Endothelial cell of umbilical vein (primary cell): ENCODE measurements at regions of chr12 and their contacts with region 1.

Region 1: GRCh38 chr12:6285063-6285477 is 25.4 kb upstream of the PLEKHG6 start:
- DNase-seq: peak; percentile 76
- H3K4me3 ChIP-seq: no peak overlapping the region
- H3K27ac ChIP-seq: peak overlapping the region; percentile 63
- H3K4me1 ChIP-seq: peaks cover 28% of the 10 kb centered on the region
- H3K27me3 ChIP-seq: no peaks in the 10 kb centered on the region
- CTCF ChIP-seq: peak; percentile 81 to 91
- POLR2A ChIP-seq: no peak

Region 2: DNA sequence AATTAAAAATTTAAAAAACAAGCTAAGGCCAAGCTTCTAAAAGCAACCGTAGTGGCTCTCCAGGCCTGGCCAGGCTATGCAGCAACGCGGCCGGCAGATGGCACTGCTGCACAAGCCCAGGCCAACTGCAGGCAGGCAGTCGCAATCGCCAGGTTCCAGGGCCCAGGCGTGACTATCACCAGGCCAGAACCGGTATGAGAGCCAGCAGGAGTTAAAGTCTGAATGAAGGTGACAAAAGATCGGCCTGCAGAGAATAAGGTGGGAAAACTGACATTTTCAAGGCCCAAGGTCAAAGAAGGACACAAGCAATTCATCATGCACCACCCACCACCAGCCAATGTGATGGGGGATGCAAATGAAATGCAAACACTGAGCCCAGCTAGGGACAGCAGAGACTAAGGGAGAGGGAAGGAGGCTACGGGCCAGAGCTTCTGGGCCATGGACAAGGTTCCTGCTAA is 296.4 kb before region 1 on chr12:
- CTCF ChIA-PET with region 1: interaction called, 36 read pairs
- POLR2A ChIA-PET with region 1: no interaction called
- dilution Hi-C with region 1: no loop called
- intact Hi-C with region 1: loop called (anchors 1 kb)
- DNase-seq: peak; percentile 73
- H3K4me3 ChIP-seq: no peak overlapping the region
- H3K27ac ChIP-seq: no peak overlapping the region
- H3K4me1 ChIP-seq: no peaks in the 10 kb centered on the region
- H3K27me3 ChIP-seq: no peaks in the 10 kb centered on the region
- CTCF ChIP-seq: peak; percentile 91 to 93
- POLR2A ChIP-seq: no peak

Region 3: DNA sequence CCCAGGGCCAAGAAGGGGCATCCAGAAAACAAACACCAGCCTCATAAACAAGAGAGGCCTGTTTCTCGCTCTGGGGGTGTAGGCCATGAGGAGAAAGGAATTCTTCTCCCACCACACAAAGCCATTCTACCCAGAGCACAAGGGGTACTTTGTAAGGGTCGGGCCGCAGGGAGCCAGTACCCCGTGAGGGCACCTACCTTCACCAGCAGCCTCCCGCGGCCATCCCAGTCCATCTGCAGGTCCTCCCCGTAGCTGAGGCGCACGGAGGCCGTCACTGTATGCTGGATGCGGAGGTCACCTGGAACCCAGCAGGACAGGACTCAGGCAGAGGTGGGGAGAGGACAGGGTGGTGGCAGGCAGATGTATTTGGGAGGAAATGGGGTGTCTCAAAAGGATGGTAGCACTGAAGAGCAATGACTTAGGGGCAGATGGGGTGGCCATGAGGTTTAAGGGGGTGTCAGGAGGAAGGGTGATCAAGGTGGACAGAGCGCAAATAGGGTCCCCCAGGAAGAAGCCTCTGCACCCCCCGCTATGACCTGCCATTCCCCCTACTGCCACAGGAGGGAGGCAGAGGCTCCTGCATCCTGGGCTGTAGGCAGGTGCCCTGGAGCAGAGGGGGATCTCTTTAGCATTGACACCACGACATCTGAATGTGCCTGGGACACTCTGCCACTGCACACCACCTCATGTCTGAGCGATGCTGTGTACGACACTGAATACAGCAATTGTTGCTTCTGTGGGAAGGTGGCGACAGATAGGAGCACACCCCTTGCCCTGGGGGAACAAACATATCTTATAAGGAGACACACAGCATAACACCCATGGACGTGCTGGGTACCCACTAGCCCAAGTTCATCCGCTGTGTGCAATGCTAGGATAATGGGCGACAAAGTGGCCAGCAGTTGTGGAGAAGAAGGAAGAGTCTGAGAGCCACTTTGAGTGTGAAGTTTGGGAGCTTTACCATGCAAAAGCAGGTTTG is 222.0 kb before region 1 on chr12:
- CTCF ChIA-PET with region 1: interaction called, 18 read pairs
- POLR2A ChIA-PET with region 1: no interaction called
- dilution Hi-C with region 1: no loop called
- intact Hi-C with region 1: loop called (anchors 2 kb)
- DNase-seq: no peak
- H3K4me3 ChIP-seq: no peak overlapping the region
- H3K27ac ChIP-seq: no peak overlapping the region
- H3K4me1 ChIP-seq: peaks cover 14% of the 10 kb centered on the region
- H3K27me3 ChIP-seq: no peaks in the 10 kb centered on the region
- CTCF ChIP-seq: peak; percentile 61 to 83
- POLR2A ChIP-seq: peak; percentile 42

Region 4: DNA sequence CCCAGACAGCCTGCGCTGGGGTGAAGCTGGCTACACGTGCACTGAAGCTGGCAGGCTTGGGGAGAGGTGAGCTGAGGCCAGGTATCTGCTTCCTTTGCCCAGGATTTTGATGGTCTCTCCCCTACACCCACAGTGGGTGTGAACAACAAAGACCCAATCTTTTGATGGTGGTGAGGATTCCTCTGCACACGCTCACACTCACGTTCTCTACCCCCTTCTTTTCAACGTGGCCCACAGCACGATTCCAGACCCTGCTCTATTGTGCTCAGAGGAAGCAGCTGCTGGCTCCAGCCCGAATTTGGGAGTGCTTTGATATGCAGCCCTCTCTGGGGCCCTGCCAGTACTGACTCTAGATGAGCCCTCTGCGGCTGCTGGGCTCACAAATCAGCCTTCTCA is 79.9 kb before region 1 on chr12:
- CTCF ChIA-PET with region 1: interaction called, 31 read pairs
- POLR2A ChIA-PET with region 1: interaction called, 5 read pairs
- dilution Hi-C with region 1: no loop called
- intact Hi-C with region 1: no loop called
- DNase-seq: peak; percentile 69
- H3K4me3 ChIP-seq: no peak overlapping the region
- H3K27ac ChIP-seq: peak overlapping the region; percentile 85
- H3K4me1 ChIP-seq: peaks cover 48% of the 10 kb centered on the region
- H3K27me3 ChIP-seq: no peaks in the 10 kb centered on the region
- CTCF ChIP-seq: no peak
- POLR2A ChIP-seq: peak; percentile 39

Region 5: GRCh38 chr12:6230321-6231110 is 54.6 kb before region 1 on chr12:
- CTCF ChIA-PET with region 1: interaction called, 11 read pairs
- POLR2A ChIA-PET with region 1: no interaction called
- dilution Hi-C with region 1: no loop called
- intact Hi-C with region 1: no loop called
- DNase-seq: no peak
- H3K4me3 ChIP-seq: no peak overlapping the region
- H3K27ac ChIP-seq: peak overlapping the region; percentile 42
- H3K4me1 ChIP-seq: peaks cover 74% of the 10 kb centered on the region
- H3K27me3 ChIP-seq: no peaks in the 10 kb centered on the region
- CTCF ChIP-seq: no peak
- POLR2A ChIP-seq: peak; percentile 2

Region 6: GRCh38 chr12:6323340-6323994 is 38.4 kb after region 1 on chr12:
- CTCF ChIA-PET with region 1: interaction called, 11 read pairs
- POLR2A ChIA-PET with region 1: no interaction called
- dilution Hi-C with region 1: no loop called
- intact Hi-C with region 1: loop called (anchors 2 kb)
- DNase-seq: peak; percentile 98
- H3K4me3 ChIP-seq: no peak overlapping the region
- H3K27ac ChIP-seq: peak overlapping the region; percentile 80
- H3K4me1 ChIP-seq: peaks cover 36% of the 10 kb centered on the region
- H3K27me3 ChIP-seq: no peaks in the 10 kb centered on the region
- CTCF ChIP-seq: peak; percentile 62 to 67
- POLR2A ChIP-seq: no peak